ENCODE measurements at regions of chr1 and their contacts with region 1.

Region 1: GRCh38 chr1:209190591-209191261 is 392.8 kb upstream of the CAMK1G start:
- DNase-seq: peak in 3 of 5 donors; percentile 25 to 37 (median 34)
- ATAC-seq: peak in 3 of 4 donors; percentile 61 to 73 (median 71)
- H3K4me3 ChIP-seq: no peak overlapping the region
- H3K27ac ChIP-seq: no peak overlapping the region
- H3K4me1 ChIP-seq: no peaks in the 10 kb centered on the region
- H3K27me3 ChIP-seq: peaks cover 0 to 5% (median 0%) of the 10 kb centered on the region in 9 donors
- CTCF ChIP-seq: peak; percentile 46 to 78 (median 64)
- POLR2A ChIP-seq: no peak

Region 2: DNA sequence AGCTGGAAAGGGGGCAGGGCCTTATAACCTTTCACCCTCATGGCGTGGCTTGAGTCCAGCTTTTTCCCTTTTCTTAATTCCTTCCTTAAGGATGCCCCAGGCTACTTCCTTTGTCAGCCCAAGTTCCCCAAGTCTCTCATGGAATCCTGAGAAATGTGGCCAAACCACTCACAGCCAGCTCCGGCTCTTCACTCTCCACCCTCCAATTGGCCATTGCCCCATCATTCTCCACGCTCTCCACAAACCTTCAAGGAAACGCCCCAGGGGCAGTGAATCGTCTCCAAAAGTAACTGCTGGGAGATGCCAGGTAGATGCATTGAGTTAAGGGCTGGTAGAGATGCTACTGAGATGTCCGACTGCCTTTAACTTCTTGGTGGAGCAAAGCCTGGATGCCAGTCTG is 1166.3 kb before region 1 on chr1:
- intact Hi-C with region 1: loop called in 1 of 10 experiments (anchors 5 kb)
- DNase-seq: no peak
- ATAC-seq: no peak
- H3K4me3 ChIP-seq: no peak overlapping the region
- H3K27ac ChIP-seq: no peak overlapping the region
- H3K4me1 ChIP-seq: peaks cover 0 to 48% (median 5%) of the 10 kb centered on the region in 12 donors
- H3K27me3 ChIP-seq: no peaks in the 10 kb centered on the region
- CTCF ChIP-seq: no peak
- POLR2A ChIP-seq: no peak

Region 3: GRCh38 chr1:209134001-209134400 is 56.7 kb before region 1 on chr1:
- intact Hi-C with region 1: no loop called
- DNase-seq: no peak
- ATAC-seq: no peak
- H3K4me3 ChIP-seq: no peak overlapping the region
- H3K27ac ChIP-seq: no peak overlapping the region
- H3K4me1 ChIP-seq: no peaks in the 10 kb centered on the region
- H3K27me3 ChIP-seq: no peaks in the 10 kb centered on the region
- CTCF ChIP-seq: no peak
- POLR2A ChIP-seq: no peak

Region 4: DNA sequence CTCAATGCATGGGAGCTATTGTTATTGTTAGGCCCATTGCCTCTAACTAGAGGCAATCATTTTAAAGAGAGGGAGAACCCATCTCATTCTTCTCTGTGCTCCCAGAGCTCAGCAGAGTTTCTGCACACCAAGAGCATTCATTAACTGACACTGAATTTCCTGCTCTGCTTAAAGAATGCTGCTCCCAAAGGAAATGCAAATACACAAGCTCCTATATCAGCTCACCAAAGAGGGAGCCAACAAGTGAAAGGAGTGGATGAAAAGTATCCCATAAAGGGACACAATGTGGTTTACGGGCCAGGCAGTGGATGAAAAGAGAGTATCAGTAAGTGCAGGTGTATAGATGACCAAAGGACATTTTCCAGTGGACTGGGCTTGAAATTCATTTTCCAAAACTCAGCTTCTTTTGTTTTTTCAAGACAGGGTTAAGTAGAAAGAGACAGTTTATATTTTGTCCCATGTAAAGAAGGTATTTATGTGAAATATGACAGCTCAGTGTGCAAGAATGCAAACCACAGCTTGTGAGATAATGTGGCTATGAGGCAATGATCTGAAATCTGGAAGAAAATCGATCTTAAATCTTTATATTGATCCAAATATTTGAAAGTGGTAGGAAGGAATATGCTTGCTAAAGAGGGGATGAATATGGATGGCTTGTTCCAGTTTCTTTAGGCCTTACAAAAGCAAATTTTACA is 185.1 kb after region 1 on chr1:
- intact Hi-C with region 1: no loop called
- DNase-seq: no peak
- ATAC-seq: no peak
- H3K4me3 ChIP-seq: no peak overlapping the region
- H3K27ac ChIP-seq: no peak overlapping the region
- H3K4me1 ChIP-seq: no peaks in the 10 kb centered on the region
- H3K27me3 ChIP-seq: peaks cover 0 to 7% (median 0%) of the 10 kb centered on the region in 9 donors
- CTCF ChIP-seq: no peak
- POLR2A ChIP-seq: no peak

Measured in heart left ventricle (tissue), 16 donors.